OCI-LY7 (cell line): ENCODE measurements at regions of chr11 and their contacts with region 1.

Region 1: DNA sequence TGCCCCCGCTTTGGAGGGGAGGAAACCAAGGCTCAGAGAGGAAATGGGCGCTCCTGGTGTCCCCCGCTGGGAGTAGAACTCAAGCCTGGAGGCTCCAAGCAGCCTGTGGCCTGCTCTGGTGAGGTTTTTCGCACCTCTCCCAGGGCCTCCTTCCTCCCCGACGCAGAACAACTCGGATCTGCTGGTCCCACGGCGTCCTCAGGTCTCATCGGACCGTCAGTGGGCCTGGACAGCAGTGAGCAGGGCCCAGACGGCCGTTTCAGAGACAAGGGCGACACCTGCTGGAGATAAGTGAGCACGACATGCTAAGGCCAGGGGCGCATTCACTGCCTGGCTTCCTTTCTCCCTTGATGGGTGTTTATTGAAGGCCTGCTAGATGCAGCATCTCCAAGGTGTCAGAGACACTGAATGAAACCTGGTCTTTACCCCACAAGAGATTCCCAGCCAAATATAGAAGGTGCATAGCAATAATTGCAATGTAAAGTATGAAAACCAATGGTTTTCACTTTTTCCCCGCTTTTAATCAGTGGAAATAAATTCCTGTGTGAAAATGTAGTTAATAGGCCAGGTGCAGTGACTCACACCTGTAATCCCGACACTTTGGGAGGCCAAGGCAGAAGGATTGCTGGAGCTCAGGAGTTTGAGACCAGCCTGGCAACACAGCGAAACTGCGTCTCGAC is 26.9 kb upstream of the CD82 start:
- DNase-seq: peak; percentile 65
- H3K4me3 ChIP-seq: no peak overlapping the region
- H3K27ac ChIP-seq: no peak overlapping the region
- H3K4me1 ChIP-seq: no peaks in the 10 kb centered on the region
- CTCF ChIP-seq: peak; percentile 90

Region 2: DNA sequence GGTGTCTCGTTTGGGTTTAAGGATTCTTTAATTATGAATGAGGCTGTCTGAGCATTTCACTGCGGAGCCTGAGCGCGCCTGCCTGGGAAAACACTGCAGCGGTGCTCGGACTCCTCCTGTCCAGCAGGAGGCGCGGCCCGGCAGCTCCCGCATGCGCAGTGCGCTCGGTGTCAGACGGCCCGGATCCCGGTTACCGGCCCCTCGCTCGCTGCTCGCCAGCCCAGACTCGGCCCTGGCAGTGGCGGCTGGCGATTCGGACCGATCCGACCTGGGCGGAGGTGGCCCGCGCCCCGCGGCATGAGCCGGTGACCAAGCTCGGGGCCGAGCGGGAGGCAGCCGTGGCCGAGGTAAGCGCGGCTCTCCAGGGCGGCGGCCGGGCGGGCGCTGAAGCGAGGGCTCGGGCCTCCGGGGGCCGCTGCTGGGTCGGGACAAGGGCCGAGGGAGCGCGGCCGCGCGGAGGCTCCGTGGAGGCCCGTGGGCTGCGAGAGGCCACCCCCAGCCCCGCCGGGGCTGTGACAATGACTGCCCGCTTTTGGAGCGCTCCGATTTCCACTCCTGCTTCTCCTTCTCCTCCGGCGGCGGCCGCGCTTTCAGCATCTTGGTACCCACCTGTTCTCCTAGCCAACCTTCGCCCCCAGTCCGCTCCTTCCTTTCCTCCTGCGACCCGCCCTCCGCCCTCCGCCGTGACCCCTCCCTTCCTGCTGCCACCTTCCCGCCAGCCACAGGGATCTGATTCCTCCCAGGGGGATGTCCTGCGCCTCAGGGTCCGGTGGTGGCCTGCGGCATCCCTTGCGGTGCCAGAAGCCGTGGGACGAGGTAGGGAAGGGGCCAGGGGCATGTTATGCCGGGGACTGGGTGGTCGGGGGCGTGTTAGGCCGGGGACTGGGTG is 442.8 kb before region 1 on chr11 and contains the start of gene EXT2:
- CTCF ChIA-PET with region 1: no interaction called
- POLR2A ChIA-PET with region 1: no interaction called
- intact Hi-C with region 1: loop called (anchors 1 kb)
- DNase-seq: peak; percentile 87
- H3K4me3 ChIP-seq: peak within 1 kb of the TSS; percentile 93
- H3K27ac ChIP-seq: no peak within 1 kb of the TSS
- H3K4me1 ChIP-seq: peaks cover 6% of the 10 kb centered on the region
- CTCF ChIP-seq: peak; percentile 82
- total RNA-seq, gene EXT2: 24.1 and 31.8 TPM in 2 replicates

Region 3: GRCh38 chr11:44110231-44110679 is 428.3 kb before region 1 on chr11:
- CTCF ChIA-PET with region 1: interaction called, 3 read pairs
- POLR2A ChIA-PET with region 1: no interaction called
- intact Hi-C with region 1: loop called (anchors 5 kb)
- DNase-seq: peak; percentile 65
- H3K4me3 ChIP-seq: no peak overlapping the region
- H3K27ac ChIP-seq: no peak overlapping the region
- H3K4me1 ChIP-seq: peaks cover 3% of the 10 kb centered on the region
- CTCF ChIP-seq: peak; percentile 94